ENCODE measurements at regions of chr14 and their contacts with region 1.

Region 1: GRCh38 chr14:20327005-20327869 is 5.8 kb downstream of the CCNB1IP1 start:
- DNase-seq: peak; percentile 79
- ATAC-seq: peak; percentile 54; the same call in 2 of the 3 replicates
- H3K4me3 ChIP-seq: no peak overlapping the region
- H3K27ac ChIP-seq: peak overlapping the region; percentile 4
- H3K4me1 ChIP-seq: peaks cover 49% of the 10 kb centered on the region
- H3K27me3 ChIP-seq: no peaks in the 10 kb centered on the region
- CTCF ChIP-seq: peak; percentile 84
- EP300 ChIP-seq: no peak
- POLR2A ChIP-seq: no peak
- RAD21 ChIP-seq: peak; percentile 81

Region 2: DNA sequence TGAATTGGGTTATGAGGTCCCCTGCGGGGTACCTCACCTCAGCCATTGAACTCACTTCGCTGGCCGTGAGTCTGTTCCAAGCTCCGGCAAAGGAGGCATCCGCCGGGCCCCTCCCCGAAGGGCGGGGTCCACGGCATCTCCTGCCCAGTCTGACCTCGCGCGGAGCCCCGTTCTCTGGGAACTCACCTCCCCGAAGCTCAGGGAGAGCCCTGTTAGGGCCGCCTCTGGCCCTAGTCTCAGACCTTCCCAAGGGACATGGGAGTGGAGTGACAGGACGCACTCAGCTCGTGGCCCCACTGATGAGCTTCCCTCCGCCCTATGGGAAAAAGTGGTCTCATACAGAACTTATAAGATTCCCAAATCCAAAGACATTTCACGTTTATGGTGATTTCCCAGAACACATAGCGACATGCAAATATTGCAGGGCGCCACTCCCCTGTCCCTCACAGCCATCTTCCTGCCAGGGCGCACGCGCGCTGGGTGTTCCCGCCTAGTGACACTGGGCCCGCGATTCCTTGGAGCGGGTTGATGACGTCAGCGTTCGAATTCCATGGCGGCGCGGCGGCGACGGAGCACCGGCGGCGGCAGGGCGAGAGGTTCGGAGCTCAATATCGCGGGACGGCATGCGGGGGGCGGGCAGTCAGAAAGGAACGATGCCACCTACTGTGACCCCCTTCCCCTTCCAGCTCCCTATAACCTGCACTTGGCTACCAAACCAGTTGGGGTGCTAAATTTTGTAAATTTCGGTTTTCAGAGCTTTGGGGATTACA is 16.0 kb after region 1 on chr14 and contains the start of gene PARP2:
- CTCF ChIA-PET with region 1: no interaction called
- POLR2A ChIA-PET with region 1: interaction called, 139 read pairs
- in situ Hi-C with region 1: no loop called
- intact Hi-C with region 1: loop called (anchors 2 kb)
- DNase-seq: peak; percentile 100
- ATAC-seq: peak; percentile 99
- H3K4me3 ChIP-seq: peak within 1 kb of the TSS; percentile 82 to 88 (median 86)
- H3K27ac ChIP-seq: peak within 1 kb of the TSS; percentile 89
- H3K4me1 ChIP-seq: peaks cover 24% of the 10 kb centered on the region
- H3K27me3 ChIP-seq: no peaks in the 10 kb centered on the region; a peak in 1 of 5 replicates
- CTCF ChIP-seq: peak; percentile 25; the same call in 1 of the 2 replicates
- EP300 ChIP-seq: no peak; a peak in 1 of 4 replicates
- POLR2A ChIP-seq: peak; percentile 82 to 99
- RAD21 ChIP-seq: peak; percentile 42; the same call in 1 of the 2 replicates
- total RNA-seq, gene PARP2: 37.3 and 39.1 TPM in 2 replicates

Region 3: DNA sequence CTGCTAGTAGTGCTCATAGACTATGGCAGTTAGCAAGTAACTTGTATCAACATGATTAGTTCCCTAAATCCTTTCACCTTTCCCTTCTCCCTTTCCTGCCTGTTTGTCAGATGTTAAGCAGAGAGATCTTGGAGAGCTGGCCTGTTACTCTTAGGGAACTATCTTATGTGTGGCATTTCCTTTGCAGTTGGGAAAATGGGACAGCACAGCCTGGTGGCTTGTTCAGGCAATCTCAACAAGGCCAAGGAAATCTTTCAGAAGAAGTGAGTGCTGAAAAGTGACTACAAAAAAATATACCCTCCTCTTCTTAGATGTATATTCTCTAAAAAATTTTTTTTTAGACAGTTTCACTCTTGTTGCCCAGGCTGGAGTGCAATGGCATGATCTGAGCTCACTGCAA is 23.6 kb after region 1 on chr14:
- CTCF ChIA-PET with region 1: interaction called, 11 read pairs
- POLR2A ChIA-PET with region 1: no interaction called
- in situ Hi-C with region 1: no loop called
- intact Hi-C with region 1: loop called (anchors 1 kb)
- DNase-seq: no peak
- ATAC-seq: peak; percentile 60; the same call in 1 of the 3 replicates
- H3K4me3 ChIP-seq: no peak overlapping the region
- H3K27ac ChIP-seq: no peak overlapping the region
- H3K4me1 ChIP-seq: peaks cover 11% of the 10 kb centered on the region
- H3K27me3 ChIP-seq: no peaks in the 10 kb centered on the region
- CTCF ChIP-seq: no peak
- EP300 ChIP-seq: no peak
- POLR2A ChIP-seq: no peak
- RAD21 ChIP-seq: no peak

Region 4: GRCh38 chr14:20461274-20462001 is 134.2 kb after region 1 on chr14 and contains the start of gene PIP4P1:
- CTCF ChIA-PET with region 1: no interaction called
- POLR2A ChIA-PET with region 1: interaction called, 15 read pairs
- in situ Hi-C with region 1: loop called (anchors 25 kb)
- intact Hi-C with region 1: no loop called
- DNase-seq: peak; percentile 100
- ATAC-seq: peak; percentile 97
- H3K4me3 ChIP-seq: peak within 1 kb of the TSS; percentile 67 to 89 (median 78)
- H3K27ac ChIP-seq: peak within 1 kb of the TSS; percentile 80
- H3K4me1 ChIP-seq: peaks cover 56% of the 10 kb centered on the region
- H3K27me3 ChIP-seq: no peaks in the 10 kb centered on the region; a peak in 1 of 5 replicates
- CTCF ChIP-seq: no peak; the same call in 1 of the 2 replicates
- EP300 ChIP-seq: peak; percentile 25 to 56; a peak in 3 of 4 replicates
- POLR2A ChIP-seq: peak in 1 of 2 experiments; percentile 85; a peak in 3 of 4 replicates
- RAD21 ChIP-seq: peak; percentile 51
- total RNA-seq, gene PIP4P1: 31.9 and 33.4 TPM in 2 replicates

Region 5: DNA sequence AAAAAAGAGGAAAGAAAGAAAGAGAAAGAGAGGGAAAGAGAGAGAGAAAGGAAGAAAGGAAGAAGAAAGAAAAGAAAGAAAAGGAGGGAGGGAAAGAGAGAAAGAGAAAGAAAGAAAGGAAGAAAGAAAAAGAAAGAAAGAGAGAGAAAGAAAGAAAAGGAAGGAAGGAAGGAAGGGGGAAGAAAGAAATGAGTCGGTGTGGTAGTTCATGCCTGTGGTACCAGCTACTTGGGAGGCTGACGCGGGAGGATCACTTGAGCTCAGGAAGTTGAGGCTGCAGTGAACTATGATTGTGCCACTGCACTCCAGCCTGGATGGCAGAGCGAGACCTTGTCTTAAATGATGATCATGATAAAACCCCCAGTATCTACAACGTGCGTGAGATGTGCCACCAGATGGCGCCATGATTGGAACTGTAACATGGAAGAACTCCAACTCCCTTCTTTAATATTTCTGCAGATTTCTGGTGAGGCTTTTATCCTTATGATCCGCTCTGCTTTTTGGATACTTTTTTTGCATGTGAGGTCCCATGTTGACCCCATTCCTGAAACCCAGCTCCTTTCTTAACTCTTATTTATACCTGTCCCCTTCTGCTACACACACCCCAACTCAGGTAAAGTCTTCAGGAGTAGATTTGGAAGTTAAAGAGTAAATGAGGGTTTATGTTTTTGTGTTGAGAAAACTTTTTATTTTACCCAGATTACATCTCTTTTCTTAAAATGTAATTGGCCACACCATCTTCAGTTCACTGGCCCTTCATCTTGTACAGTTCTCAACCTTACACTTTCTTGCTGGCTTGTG is 203.7 kb after region 1 on chr14:
- CTCF ChIA-PET with region 1: no interaction called
- POLR2A ChIA-PET with region 1: no interaction called
- in situ Hi-C with region 1: no loop called
- intact Hi-C with region 1: loop called (anchors 2 kb)
- DNase-seq: peak; percentile 75
- ATAC-seq: peak; percentile 94
- H3K4me3 ChIP-seq: no peak overlapping the region
- H3K27ac ChIP-seq: no peak overlapping the region
- H3K4me1 ChIP-seq: peaks cover 9% of the 10 kb centered on the region; the same call in 1 of the 2 replicates
- H3K27me3 ChIP-seq: no peaks in the 10 kb centered on the region; a peak in 2 of 5 replicates
- CTCF ChIP-seq: peak; percentile 83
- EP300 ChIP-seq: no peak
- POLR2A ChIP-seq: no peak
- RAD21 ChIP-seq: peak; percentile 54; the same call in 1 of the 2 replicates

Region 6: GRCh38 chr14:20606190-20606901 is 279.1 kb after region 1 on chr14:
- CTCF ChIA-PET with region 1: interaction called, 26 read pairs
- POLR2A ChIA-PET with region 1: interaction called, 3 read pairs
- in situ Hi-C with region 1: loop called (anchors 5 kb)
- intact Hi-C with region 1: loop called (anchors 1 kb)
- DNase-seq: peak; percentile 79
- ATAC-seq: peak; percentile 80
- H3K4me3 ChIP-seq: peak overlapping the region; percentile 25 to 59 (median 33); a peak in 5 of 6 replicates
- H3K27ac ChIP-seq: no peak overlapping the region
- H3K4me1 ChIP-seq: peaks cover 53% of the 10 kb centered on the region
- H3K27me3 ChIP-seq: no peaks in the 10 kb centered on the region; a peak in 1 of 5 replicates
- CTCF ChIP-seq: peak; percentile 95
- EP300 ChIP-seq: peak in 1 of 2 experiments; percentile 38; a peak in 1 of 4 replicates
- POLR2A ChIP-seq: no peak
- RAD21 ChIP-seq: peak; percentile 85